MCF 10A (cell line): ENCODE measurements at regions of chr10 and their contacts with region 1.

Region 1: GRCh38 chr10:71569775-71570588 is 149.6 kb downstream of the C10orf105 start:
- DNase-seq: peak; percentile 73
- H3K4me3 Mint-ChIP-seq: no peak overlapping the region
- H3K27ac Mint-ChIP-seq: no peak overlapping the region
- H3K4me1 Mint-ChIP-seq: no peaks in the 10 kb centered on the region
- H3K27me3 Mint-ChIP-seq: peaks cover 19% of the 10 kb centered on the region
- CTCF ChIP-seq: peak; percentile 74

Region 2: GRCh38 chr10:71314028-71314693 is 255.8 kb before region 1 on chr10:
- CTCF ChIA-PET with region 1: interaction called, 169 read pairs
- POLR2A ChIA-PET with region 1: interaction called, 7 read pairs
- intact Hi-C with region 1: loop called (anchors 1 kb)
- DNase-seq: peak; percentile 35
- H3K4me3 Mint-ChIP-seq: no peak overlapping the region
- H3K27ac Mint-ChIP-seq: no peak overlapping the region
- H3K4me1 Mint-ChIP-seq: peaks cover 11% of the 10 kb centered on the region
- H3K27me3 Mint-ChIP-seq: no peaks in the 10 kb centered on the region
- CTCF ChIP-seq: peak; percentile 77

Region 3: DNA sequence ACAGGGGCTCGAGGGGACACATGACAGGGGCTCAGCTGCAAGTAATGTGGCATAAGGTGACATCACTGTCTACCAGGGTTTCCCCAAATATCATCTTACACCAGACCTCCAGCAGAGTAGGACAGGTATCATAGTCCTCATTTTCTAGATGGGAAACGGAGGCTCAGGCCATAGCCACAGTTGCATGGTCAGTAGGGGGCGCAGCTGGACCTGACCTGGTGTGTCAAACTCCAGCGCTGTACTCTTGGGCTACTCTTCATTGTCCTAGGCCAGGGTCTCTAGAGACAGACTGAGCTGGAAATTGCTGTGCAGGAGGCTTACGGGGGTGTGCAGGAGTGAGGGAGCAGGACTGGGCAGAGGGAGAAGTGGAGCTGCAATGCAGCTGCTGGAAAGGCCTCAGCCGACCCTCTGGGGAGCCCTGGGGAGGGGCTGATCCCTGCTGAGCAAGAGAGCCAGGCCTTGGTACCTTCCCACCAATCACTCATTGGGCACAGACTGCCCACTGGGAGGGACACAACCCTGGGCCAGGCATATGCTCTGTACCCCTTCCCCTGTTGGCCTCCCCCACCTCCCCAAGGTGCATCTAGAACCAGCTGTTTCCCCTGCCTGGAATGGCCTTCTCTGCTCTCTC is 83.4 kb before region 1 on chr10:
- CTCF ChIA-PET with region 1: no interaction called
- POLR2A ChIA-PET with region 1: no interaction called
- intact Hi-C with region 1: loop called (anchors 2 kb)
- DNase-seq: peak; percentile 54
- H3K4me3 Mint-ChIP-seq: no peak overlapping the region
- H3K27ac Mint-ChIP-seq: no peak overlapping the region
- H3K4me1 Mint-ChIP-seq: no peaks in the 10 kb centered on the region
- H3K27me3 Mint-ChIP-seq: peaks cover 58% of the 10 kb centered on the region
- CTCF ChIP-seq: peak; percentile 52

Region 4: GRCh38 chr10:71582019-71582418 is 12.0 kb after region 1 on chr10:
- CTCF ChIA-PET with region 1: interaction called, 31 read pairs
- POLR2A ChIA-PET with region 1: interaction called, 4 read pairs
- intact Hi-C with region 1: no loop called
- DNase-seq: peak; percentile 30
- H3K4me3 Mint-ChIP-seq: no peak overlapping the region
- H3K27ac Mint-ChIP-seq: no peak overlapping the region
- H3K4me1 Mint-ChIP-seq: no peaks in the 10 kb centered on the region
- H3K27me3 Mint-ChIP-seq: peaks cover 29% of the 10 kb centered on the region
- CTCF ChIP-seq: no peak

Region 5: GRCh38 chr10:71608819-71609768 is 39.1 kb after region 1 on chr10:
- CTCF ChIA-PET with region 1: interaction called, 10 read pairs
- POLR2A ChIA-PET with region 1: no interaction called
- intact Hi-C with region 1: no loop called
- DNase-seq: peak; percentile 61
- H3K4me3 Mint-ChIP-seq: no peak overlapping the region
- H3K27ac Mint-ChIP-seq: no peak overlapping the region
- H3K4me1 Mint-ChIP-seq: peaks cover 6% of the 10 kb centered on the region
- H3K27me3 Mint-ChIP-seq: peaks cover 57% of the 10 kb centered on the region
- CTCF ChIP-seq: peak; percentile 78